Head of caudate nucleus (tissue), 42 donors: ENCODE measurements at regions of chr4 and their contacts with region 1.

Region 1: GRCh38 chr4:78864405-78865024 is 74.7 kb downstream of the PAQR3 start:
- DNase-seq: peak in 11 of 42 donors; percentile 11 to 67 (median 33)

Region 2: DNA sequence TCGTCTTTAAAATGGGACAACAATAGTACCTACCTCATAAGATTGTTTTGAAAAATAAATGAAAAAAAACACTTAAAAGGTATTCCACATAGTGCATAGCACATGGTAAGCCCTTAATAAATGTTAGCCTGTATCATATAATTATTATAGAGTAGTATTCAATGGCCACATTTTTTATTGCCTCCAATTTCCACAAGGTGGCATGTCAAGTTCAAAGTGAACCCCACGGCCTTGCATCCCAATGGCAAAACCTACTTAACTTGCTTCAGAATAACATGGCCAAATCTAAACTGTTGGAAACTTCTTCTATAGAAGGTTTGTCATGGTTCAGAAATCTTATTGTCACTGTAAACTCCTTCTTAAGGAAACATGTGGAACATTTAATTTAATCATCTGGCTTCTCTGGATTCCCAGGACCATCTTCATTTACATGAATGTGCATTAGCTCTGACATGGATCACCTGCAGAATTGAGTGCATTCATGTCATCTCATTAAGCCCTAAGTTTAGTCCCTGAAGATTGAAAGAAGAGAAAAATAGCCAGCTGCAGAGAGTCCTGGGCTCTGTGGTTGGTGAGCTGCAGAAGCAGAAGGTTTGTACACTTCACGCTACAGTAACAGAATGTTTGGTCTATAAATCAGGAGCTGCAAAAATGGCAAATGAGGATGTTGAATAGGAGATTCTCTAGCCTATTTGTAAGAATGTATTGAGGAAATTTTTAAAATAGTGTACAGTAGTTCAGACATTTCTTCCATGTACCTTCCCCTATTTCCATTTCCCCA is 251.9 kb before region 1 on chr4:
- intact Hi-C with region 1: loop called (anchors 5 kb)
- DNase-seq: peak in 30 of 42 donors; percentile 8 to 74 (median 44)

Region 3: DNA sequence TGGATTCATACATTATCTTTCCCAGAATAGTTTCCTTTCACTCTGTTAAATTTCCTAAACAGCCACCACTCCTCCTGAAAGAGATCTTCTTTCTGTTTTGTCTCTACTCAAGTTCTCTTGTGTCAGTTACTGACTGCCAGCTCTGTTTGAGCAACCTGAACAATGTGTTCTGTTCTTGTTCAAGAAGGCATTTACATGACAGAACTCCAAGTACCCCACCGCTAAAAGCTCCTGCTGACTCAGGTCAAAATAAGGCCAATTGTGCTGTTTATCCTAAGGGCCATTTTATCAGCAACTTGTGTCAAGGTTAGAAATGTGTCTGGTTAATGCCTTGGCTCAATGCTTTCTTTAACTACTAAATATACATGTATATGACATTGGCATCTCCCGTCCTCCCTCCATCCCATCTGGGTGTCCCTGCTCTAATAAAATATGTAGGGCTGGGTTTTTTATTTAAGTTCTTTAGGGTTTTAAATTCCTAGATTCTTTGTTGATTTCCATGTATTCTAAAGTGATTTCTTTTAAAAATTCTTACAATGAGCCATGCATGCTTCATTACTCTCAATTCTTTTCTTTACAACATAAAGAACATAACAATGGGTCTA is 219.0 kb after region 1 on chr4:
- intact Hi-C with region 1: no loop called
- DNase-seq: peak in 1 of 42 donors; percentile 6